ENCODE measurements at regions of chr14 and their contacts with region 1.

Region 1: DNA sequence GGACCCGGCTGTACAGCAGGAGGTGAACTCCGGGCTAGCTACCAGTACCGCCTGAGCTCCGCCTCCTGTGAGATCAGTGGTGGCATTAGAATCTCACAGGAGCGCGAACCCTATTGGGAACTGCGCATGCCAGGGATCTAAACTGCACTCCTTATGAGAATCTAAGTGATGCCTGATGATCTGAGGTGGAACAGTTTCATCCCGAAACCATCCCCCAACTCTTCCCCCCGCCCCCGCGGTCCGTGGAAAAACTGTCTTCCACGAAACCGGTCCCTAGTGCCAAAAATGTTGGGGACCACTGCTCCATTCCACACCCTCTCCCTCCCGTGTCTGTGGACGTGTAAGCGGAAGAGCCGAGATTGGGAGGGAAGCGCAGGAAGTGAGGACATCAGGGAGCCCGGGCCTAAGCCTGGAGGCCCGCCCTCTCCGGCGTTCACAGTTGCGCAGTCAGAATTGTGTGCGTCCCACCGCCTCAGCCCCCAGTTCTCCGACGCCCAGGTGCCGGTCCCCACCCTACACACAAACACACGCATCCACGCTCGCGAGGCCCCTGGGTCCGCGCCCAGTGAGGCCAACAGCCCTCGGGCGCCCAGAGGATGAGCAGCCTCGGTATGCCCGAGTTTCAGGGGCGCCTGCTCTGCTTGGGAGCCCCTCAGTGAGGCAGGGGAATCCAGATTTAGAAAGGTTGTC is 1.8 kb upstream of the RNASE4 start:
- DNase-seq: peak; percentile 31
- H3K4me3 ChIP-seq: peak overlapping the region; percentile 65 to 93 (median 80)
- H3K27ac ChIP-seq: peak overlapping the region; percentile 98 to 100 (median 99)
- H3K4me1 ChIP-seq: peaks cover 20 to 66% (median 21%) of the 10 kb centered on the region in 3 donors
- H3K27me3 ChIP-seq: no peaks in the 10 kb centered on the region
- CTCF ChIP-seq: peak in 3 of 6 experiments; percentile 3 to 9 (median 4)
- POLR2A ChIP-seq: peak in 3 of 4 donors; percentile 68 to 96 (median 92)

Region 2: DNA sequence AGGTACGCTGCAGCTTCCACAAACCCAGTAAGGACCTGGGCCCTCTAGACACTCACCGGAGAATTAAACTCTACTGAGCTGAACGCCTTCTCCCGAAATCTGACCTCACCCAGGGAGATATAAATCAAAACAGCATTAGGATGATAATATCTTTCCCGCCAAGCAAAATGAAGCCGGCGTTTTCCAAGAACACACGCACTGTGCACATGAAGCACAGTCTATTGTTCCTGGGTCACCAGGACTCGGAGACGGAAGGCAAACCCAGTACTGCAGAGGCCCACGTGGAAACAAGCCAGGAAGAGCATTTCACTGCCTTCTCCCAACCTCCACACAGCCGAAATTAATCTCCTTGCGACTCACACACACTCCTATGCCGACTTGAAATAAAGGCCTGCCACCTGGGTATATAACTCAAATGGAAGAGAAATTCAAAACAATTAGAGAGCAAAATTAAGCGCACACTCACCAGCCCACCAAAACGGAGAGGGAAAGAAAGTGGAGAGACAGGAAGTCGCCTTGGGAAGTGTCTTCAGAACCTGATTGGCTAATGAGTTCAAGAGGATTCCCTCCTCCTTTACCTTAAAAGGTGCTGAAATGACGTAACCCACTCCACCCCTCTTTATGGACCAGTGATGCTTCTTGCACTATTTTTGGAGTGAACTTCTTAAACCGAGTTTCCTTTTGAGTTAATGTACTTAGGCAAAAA is 349.6 kb before region 1 on chr14 and contains the start of gene CCNB1IP1:
- intact Hi-C with region 1: loop called (anchors 10 kb)
- DNase-seq: no peak
- H3K4me3 ChIP-seq: peak within 1 kb of the TSS; percentile 40 to 73 (median 64)
- H3K27ac ChIP-seq: peak within 1 kb of the TSS; percentile 78 to 94 (median 90)
- H3K4me1 ChIP-seq: peaks cover 0 to 40% (median 0%) of the 10 kb centered on the region in 3 donors
- H3K27me3 ChIP-seq: no peaks in the 10 kb centered on the region
- CTCF ChIP-seq: no peak
- POLR2A ChIP-seq: peak in 2 of 4 donors; percentile 43 to 61
- total RNA-seq, gene CCNB1IP1: 7.6 to 68.1 (median 33.4) TPM

Region 3: GRCh38 chr14:20559461-20559904 is 123.1 kb before region 1 on chr14:
- intact Hi-C with region 1: no loop called
- DNase-seq: no peak
- H3K4me3 ChIP-seq: no peak overlapping the region
- H3K27ac ChIP-seq: no peak overlapping the region
- H3K4me1 ChIP-seq: no peaks in the 10 kb centered on the region
- H3K27me3 ChIP-seq: no peaks in the 10 kb centered on the region
- CTCF ChIP-seq: no peak
- POLR2A ChIP-seq: no peak

Region 4: GRCh38 chr14:20644520-20644919 is 38.1 kb before region 1 on chr14:
- intact Hi-C with region 1: no loop called
- DNase-seq: no peak
- H3K4me3 ChIP-seq: no peak overlapping the region
- H3K27ac ChIP-seq: no peak overlapping the region
- H3K4me1 ChIP-seq: no peaks in the 10 kb centered on the region
- H3K27me3 ChIP-seq: peaks cover 0 to 57% (median 1%) of the 10 kb centered on the region in 4 donors
- CTCF ChIP-seq: no peak
- POLR2A ChIP-seq: no peak